IMR-90 (cell line): ENCODE measurements at regions of chr3 and their contacts with region 1.

Region 1: GRCh38 chr3:28206479-28206878 is 34.9 kb upstream of the CMC1 start:
- DNase-seq: no peak
- ATAC-seq: no peak
- H3K4me3 ChIP-seq: no peak overlapping the region
- H3K27ac ChIP-seq: no peak overlapping the region
- H3K4me1 ChIP-seq: no peaks in the 10 kb centered on the region
- H3K27me3 ChIP-seq: no peaks in the 10 kb centered on the region
- CTCF ChIP-seq: no peak
- POLR2A ChIP-seq: no peak
- RAD21 ChIP-seq: no peak

Region 2: GRCh38 chr3:28171962-28172361 is 34.5 kb before region 1 on chr3:
- CTCF ChIA-PET with region 1: no interaction called
- POLR2A ChIA-PET with region 1: no interaction called
- dilution Hi-C with region 1: no loop called
- in situ Hi-C with region 1: no loop called
- intact Hi-C with region 1: loop called (anchors 1 kb)
- DNase-seq: peak; percentile 1
- ATAC-seq: no peak
- H3K4me3 ChIP-seq: no peak overlapping the region
- H3K27ac ChIP-seq: no peak overlapping the region
- H3K4me1 ChIP-seq: no peaks in the 10 kb centered on the region
- H3K27me3 ChIP-seq: no peaks in the 10 kb centered on the region
- CTCF ChIP-seq: no peak
- POLR2A ChIP-seq: no peak
- RAD21 ChIP-seq: no peak